ENCODE measurements at regions of chr6 and their contacts with region 1.

Region 1: GRCh38 chr6:96626759-96627364 is 63.9 kb downstream of the FHL5 start:
- ATAC-seq: peak; percentile 67 to 86 (median 77)
- H3K4me3 ChIP-seq: no peak overlapping the region
- H3K27ac ChIP-seq: no peak overlapping the region
- H3K4me1 ChIP-seq: peaks cover 0 to 3% of the 10 kb centered on the region in 2 donors

Region 2: DNA sequence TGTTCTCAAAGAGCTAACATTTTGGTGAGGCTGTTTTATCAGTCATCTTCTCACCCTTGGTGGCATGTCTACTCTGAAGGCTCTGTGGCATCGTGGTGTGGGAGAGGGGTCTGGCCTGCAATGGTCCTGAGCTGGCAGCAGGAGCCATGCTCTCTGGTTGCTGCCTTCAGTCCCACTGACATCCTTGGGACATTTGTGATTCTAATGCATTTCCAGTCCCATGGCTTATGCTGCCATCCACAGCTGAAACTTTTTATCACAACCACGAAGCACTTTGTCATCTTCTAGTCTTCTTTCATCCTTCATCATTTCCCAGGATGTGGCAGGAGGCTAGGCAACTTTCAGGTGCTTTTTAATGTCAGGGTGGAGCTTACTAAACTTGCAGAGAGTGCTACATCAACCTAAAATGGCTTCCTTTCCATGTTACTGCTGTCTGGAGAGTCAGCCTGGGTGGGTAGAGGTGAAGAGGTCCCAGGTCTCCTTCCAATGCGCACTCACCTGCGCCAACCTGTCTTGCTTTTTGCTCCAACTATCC is 133.4 kb after region 1 on chr6:
- in situ Hi-C with region 1: loop called in 1 of 9 experiments (anchors 25 kb)
- ATAC-seq: peak in 3 of 8 experiments; percentile 23 to 46 (median 38)
- H3K4me3 ChIP-seq: no peak overlapping the region
- H3K27ac ChIP-seq: no peak overlapping the region
- H3K4me1 ChIP-seq: no peaks in the 10 kb centered on the region

Region 3: GRCh38 chr6:96897383-96898240 is 270.8 kb after region 1 on chr6 and contains the start of gene NDUFAF4:
- in situ Hi-C with region 1: loop called in 3 of 9 experiments (anchors 10 to 25 kb)
- ATAC-seq: peak; percentile 79 to 96 (median 94)
- H3K4me3 ChIP-seq: peak within 1 kb of the TSS; percentile 57 to 73 (median 67)
- H3K27ac ChIP-seq: peak within 1 kb of the TSS; percentile 52 to 65
- H3K4me1 ChIP-seq: peaks cover 4 to 12% of the 10 kb centered on the region in 2 donors
- total RNA-seq, gene NDUFAF4: 25.2 to 47.1 (median 36.0) TPM

Region 4: DNA sequence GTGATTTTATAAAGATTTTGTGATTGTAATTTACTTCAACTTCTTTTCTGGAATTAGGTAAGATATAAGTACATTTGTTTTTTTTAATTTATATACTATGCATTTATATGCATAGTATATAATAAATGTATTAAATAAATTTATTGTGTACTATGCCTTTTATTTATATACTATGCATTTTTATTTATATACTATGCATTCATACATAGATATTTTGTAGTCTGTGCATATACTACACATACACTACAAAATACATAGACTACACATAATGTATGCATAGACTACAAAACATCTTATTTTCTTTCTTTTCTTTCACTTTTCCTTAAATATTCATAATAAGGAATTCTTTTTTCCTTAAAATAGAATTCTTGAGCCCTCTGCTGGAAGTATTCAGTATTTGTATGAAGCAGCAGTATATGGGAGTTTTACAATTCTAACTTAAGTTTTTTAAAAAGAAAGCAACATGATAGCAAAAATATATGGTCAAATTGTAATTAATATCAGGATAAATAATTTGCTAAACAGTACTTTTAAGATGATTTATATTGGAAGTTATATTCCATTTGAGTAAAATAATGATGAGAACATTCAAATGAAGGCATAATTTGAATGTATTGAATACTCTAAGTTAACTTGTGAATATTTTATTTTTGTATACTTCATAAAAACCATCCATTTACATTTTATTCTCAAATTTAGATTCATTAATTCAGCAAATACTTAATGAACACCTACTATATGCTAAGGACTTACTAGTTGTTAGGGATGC is 427.0 kb after region 1 on chr6:
- in situ Hi-C with region 1: loop called in 5 of 9 experiments (anchors 10 to 25 kb)
- ATAC-seq: no peak
- H3K4me3 ChIP-seq: no peak overlapping the region
- H3K27ac ChIP-seq: no peak overlapping the region
- H3K4me1 ChIP-seq: peaks cover 12% of the 10 kb centered on the region in 2 donors